AG04449 (cell line): ENCODE measurements at regions of chr3 and their contacts with region 1.

Region 1: DNA sequence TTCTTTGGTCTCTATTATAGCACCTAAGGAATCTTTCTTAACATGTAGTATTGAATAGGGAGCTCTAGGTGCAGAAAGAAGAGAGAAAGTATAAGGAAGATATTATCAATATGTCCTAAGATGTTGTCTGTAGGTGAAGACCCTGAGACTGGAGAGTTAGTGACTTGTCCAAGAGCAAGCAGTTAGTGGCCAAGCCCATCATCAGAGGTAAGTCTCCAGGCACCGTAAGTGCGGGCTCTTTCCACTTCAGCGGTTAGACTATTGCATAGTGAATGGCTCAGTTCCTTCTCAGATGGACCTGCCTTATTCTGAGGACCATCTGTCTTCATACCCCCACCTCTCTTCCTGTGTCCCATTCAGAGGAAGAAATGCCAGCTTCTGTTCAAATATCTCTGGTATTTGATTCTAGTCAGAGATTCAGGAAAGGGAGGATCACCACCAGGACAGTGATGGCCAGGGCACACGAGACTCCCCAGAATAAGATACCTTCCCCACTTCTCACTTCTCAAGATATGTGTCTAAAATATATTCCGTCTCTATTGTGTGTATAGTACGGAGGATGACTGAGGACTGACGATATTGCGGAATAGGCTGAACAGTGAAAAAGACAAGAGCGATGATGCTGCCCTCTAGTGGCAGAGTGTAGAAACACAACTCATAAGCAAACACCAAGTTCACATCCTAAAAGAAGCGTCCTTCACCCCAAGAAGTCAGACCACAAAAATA is 19.1 kb upstream of the ADGRG7 start:
- DNase-seq: no peak
- H3K4me3 ChIP-seq: peak overlapping the region; percentile 10; the same call in 1 of the 2 replicates
- CTCF ChIP-seq: peak; percentile 72

Region 2: DNA sequence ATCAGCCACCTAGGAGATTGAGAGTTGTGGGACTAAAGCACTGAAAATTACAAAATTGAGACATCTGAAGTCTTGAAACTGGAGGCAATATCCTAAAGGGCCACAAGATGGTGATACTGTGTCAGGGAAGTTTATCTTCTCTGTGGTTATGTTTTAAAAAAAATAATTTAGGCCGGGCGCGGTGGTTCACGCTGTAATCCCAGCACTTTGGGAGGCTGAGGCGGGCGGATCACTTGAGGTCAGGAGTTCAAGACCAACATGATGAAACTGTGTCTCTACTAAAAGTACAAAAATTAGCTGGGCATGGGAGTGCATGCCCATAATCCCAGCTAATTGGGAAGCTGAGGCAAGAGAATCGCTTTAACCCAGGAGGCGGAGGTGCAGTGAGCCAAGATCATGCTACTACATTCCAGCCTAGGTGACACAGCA is 273.6 kb before region 1 on chr3:
- CTCF ChIA-PET with region 1: interaction called, 18 read pairs
- POLR2A ChIA-PET with region 1: no interaction called
- DNase-seq: peak; percentile 34
- H3K4me3 ChIP-seq: no peak overlapping the region
- CTCF ChIP-seq: peak; percentile 61

Region 3: GRCh38 chr3:100449214-100449613 is 141.1 kb before region 1 on chr3:
- CTCF ChIA-PET with region 1: interaction called, 26 read pairs
- POLR2A ChIA-PET with region 1: no interaction called
- DNase-seq: no peak
- H3K4me3 ChIP-seq: no peak overlapping the region
- CTCF ChIP-seq: no peak

Region 4: GRCh38 chr3:100486808-100487207 is 103.5 kb before region 1 on chr3:
- CTCF ChIA-PET with region 1: interaction called, 14 read pairs
- POLR2A ChIA-PET with region 1: no interaction called
- DNase-seq: no peak
- H3K4me3 ChIP-seq: no peak overlapping the region
- CTCF ChIP-seq: no peak

Region 5: DNA sequence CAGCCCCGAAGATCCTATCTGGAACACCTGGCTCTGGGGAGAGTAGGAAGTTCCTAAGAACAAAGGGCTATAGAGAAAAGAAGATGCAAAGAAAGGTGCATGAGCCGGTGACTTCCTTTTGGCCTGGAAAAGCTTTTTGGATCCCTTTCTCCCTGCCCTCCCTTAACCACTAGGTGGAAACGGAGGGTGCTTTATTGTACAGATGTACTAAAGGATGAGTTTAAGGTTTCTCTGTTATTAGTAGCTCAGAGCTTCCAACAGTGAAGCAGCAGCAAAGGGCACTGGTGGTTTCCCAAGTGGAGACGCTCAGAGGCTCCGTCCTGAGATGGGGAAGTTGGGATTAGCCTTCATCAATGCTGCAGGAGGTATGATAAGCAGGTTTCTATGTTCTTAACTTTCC is 13.2 kb after region 1 on chr3:
- CTCF ChIA-PET with region 1: interaction called, 92 read pairs
- POLR2A ChIA-PET with region 1: no interaction called
- DNase-seq: no peak
- H3K4me3 ChIP-seq: no peak overlapping the region
- CTCF ChIP-seq: peak; percentile 61